ENCODE measurements at regions of chr3 and their contacts with region 1.

Region 1: GRCh38 chr3:132722164-132723024 is at the start of gene NPHP3:
- DNase-seq: peak; percentile 99
- total RNA-seq, gene NPHP3: 22.1 to 24.9 TPM

Region 2: GRCh38 chr3:132378048-132378762 is 344.2 kb before region 1 on chr3:
- intact Hi-C with region 1: no loop called
- DNase-seq: no peak

Region 3: GRCh38 chr3:133578548-133579191 is 856.3 kb after region 1 on chr3:
- intact Hi-C with region 1: loop called (anchors 5 to 10 kb)
- DNase-seq: no peak

Measured in posterior vena cava (tissue), 2 donors.